ENCODE measurements at regions of chr20 and their contacts with region 1.

Region 1: DNA sequence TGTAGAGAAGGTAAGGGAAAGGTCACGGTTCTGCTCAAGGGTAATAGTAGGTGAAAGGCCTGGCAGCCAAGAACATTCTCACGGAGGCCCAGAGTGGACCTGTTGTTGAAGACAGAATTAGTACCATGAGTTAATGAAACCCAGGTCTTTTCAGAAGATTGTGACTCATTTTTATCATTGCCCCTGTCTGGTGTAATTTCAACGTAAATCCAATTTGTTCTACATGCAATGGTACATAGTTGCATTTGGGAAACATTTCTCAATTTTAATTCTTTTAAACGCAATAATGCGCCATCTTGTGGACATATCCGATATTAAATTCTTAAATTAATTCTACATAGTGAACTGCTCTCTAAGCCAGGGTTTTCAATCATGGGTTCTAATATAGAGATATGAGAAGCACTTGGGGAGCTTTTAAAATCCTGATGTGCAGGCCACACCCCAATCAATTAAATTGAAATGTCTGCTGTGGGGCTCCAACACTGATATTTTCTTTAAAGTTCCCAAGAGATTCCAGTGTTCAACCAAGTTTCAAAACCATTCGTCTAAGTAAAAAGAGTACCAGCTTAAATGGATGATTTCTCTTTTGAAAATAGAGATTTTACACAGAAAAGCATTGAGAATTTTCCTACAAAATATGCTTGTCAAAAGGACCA is 257.4 kb downstream of the PLCB1 start:
- DNase-seq: no peak
- H3K4me3 ChIP-seq: no peak overlapping the region
- H3K27ac ChIP-seq: no peak overlapping the region
- H3K4me1 ChIP-seq: no peaks in the 10 kb centered on the region
- H3K27me3 ChIP-seq: no peaks in the 10 kb centered on the region
- CTCF ChIP-seq: peak; percentile 35

Region 2: DNA sequence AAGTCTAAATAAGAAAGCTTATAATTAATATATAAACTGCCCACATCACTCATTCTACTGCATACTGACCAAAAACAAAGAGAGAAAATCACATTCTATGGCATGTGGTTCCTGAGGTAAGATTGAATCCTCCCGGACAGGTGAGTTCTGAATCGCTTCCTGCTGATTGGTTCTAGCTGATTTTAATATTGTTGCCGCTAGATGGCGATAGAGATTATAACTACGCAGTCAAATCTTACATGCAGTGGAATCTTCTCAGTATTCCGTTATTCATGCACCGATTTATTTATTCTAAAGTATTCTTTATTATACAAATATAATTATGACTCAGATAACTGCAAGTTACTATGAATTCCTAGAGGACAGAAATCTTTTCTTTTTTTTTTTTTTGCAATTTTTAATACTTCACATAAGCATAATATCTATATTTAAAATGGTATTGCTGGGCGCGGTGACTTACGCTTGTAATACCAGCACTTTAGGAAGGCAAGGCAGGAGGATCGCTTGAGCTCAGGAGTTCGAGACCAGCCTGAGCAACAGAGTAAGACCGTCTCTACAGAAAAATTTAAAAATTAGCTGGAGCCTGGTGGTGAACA is 345.7 kb before region 1 on chr20:
- intact Hi-C with region 1: loop called (anchors 10 kb)
- DNase-seq: peak; percentile 28
- H3K4me3 ChIP-seq: no peak overlapping the region
- H3K27ac ChIP-seq: no peak overlapping the region
- H3K4me1 ChIP-seq: no peaks in the 10 kb centered on the region
- H3K27me3 ChIP-seq: no peaks in the 10 kb centered on the region
- CTCF ChIP-seq: peak; percentile 75

Region 3: GRCh38 chr20:8131598-8132483 is 257.7 kb before region 1 on chr20 and contains the start of gene PLCB1:
- intact Hi-C with region 1: loop called (anchors 2 kb)
- DNase-seq: peak; percentile 71
- H3K4me3 ChIP-seq: peak within 1 kb of the TSS; percentile 48
- H3K27ac ChIP-seq: peak within 1 kb of the TSS; percentile 47
- H3K4me1 ChIP-seq: no peaks in the 10 kb centered on the region
- H3K27me3 ChIP-seq: no peaks in the 10 kb centered on the region
- CTCF ChIP-seq: peak; percentile 61
- total RNA-seq, gene PLCB1: 8.3 to 9.6 TPM

Region 4: GRCh38 chr20:9374480-9374879 is 985.0 kb after region 1 on chr20:
- intact Hi-C with region 1: no loop called
- DNase-seq: no peak
- H3K4me3 ChIP-seq: no peak overlapping the region
- H3K27ac ChIP-seq: no peak overlapping the region
- H3K4me1 ChIP-seq: no peaks in the 10 kb centered on the region
- H3K27me3 ChIP-seq: no peaks in the 10 kb centered on the region
- CTCF ChIP-seq: no peak

Measured in colonic mucosa (tissue), 4 donors.